Heart right ventricle (tissue), 16 donors: ENCODE measurements at regions of chr11 and their contacts with region 1.

Region 1: DNA sequence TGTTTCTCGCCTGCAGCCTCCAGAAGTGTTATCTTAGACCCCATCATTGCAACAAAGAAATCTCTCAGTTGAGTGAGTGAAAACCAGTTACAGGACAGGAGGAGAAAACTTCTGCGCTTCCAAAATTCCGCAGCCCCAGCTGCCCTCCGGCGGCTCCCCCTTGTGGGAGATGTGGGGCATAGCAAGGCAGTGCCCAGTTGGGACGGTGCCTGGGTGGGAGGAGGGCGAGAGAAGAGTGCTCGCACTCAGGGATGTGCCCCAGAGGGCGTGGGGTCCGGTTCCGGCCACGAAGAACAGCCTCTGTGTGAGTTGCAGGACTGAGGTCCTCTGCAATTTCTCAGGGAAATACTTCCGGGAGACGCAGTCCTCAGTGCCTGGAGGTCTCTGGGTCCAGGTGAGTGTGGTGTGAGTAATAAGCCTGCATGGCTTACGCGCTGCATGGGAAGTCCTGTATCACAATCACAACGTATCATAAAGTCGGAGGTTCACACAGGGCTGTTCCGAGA is 87.0 kb upstream of the BLID start:
- DNase-seq: peak; percentile 66 to 76
- ATAC-seq: peak; percentile 84 to 91 (median 88)
- H3K4me3 ChIP-seq: peak overlapping the region in 8 of 10 donors; percentile 24 to 47 (median 46)
- H3K27ac ChIP-seq: peak overlapping the region in 8 of 10 donors; percentile 2 to 67 (median 46)
- H3K4me1 ChIP-seq: peaks cover 0 to 56% (median 29%) of the 10 kb centered on the region in 9 donors
- H3K27me3 ChIP-seq: no peaks in the 10 kb centered on the region
- CTCF ChIP-seq: peak; percentile 89 to 99 (median 98)

Region 2: GRCh38 chr11:121722431-121723245 is 480.4 kb before region 1 on chr11:
- intact Hi-C with region 1: loop called in 1 of 10 experiments (anchors 10 kb)
- DNase-seq: peak; percentile 73 to 80
- ATAC-seq: peak; percentile 94 to 98 (median 97)
- H3K4me3 ChIP-seq: peak overlapping the region; percentile 16 to 61 (median 51)
- H3K27ac ChIP-seq: peak overlapping the region; percentile 30 to 90 (median 84)
- H3K4me1 ChIP-seq: peaks cover 0 to 22% (median 16%) of the 10 kb centered on the region in 9 donors
- H3K27me3 ChIP-seq: peaks cover 0 to 24% (median 0%) of the 10 kb centered on the region in 7 donors
- CTCF ChIP-seq: peak in 2 of 9 donors; percentile 30 to 33

Region 3: GRCh38 chr11:122038543-122038942 is 164.5 kb before region 1 on chr11:
- intact Hi-C with region 1: loop called in 1 of 10 experiments (anchors 10 kb)
- DNase-seq: no peak
- ATAC-seq: peak in 1 of 8 donors; percentile 48
- H3K4me3 ChIP-seq: no peak overlapping the region
- H3K27ac ChIP-seq: peak overlapping the region in 2 of 10 donors; percentile 9 to 35
- H3K4me1 ChIP-seq: peaks cover 0 to 22% (median 7%) of the 10 kb centered on the region in 9 donors
- H3K27me3 ChIP-seq: no peaks in the 10 kb centered on the region
- CTCF ChIP-seq: no peak

Region 4: GRCh38 chr11:122101625-122102291 is 101.2 kb before region 1 on chr11:
- intact Hi-C with region 1: loop called in 7 of 10 experiments (anchors 5 to 10 kb)
- DNase-seq: peak; percentile 44 to 80
- ATAC-seq: peak; percentile 85 to 92 (median 88)
- H3K4me3 ChIP-seq: peak overlapping the region; percentile 25 to 68 (median 56)
- H3K27ac ChIP-seq: peak overlapping the region; percentile 77 to 96 (median 90)
- H3K4me1 ChIP-seq: peaks cover 0 to 19% (median 11%) of the 10 kb centered on the region in 9 donors
- H3K27me3 ChIP-seq: peaks cover 0 to 58% (median 25%) of the 10 kb centered on the region in 7 donors
- CTCF ChIP-seq: peak; percentile 20 to 82 (median 56)

Region 5: DNA sequence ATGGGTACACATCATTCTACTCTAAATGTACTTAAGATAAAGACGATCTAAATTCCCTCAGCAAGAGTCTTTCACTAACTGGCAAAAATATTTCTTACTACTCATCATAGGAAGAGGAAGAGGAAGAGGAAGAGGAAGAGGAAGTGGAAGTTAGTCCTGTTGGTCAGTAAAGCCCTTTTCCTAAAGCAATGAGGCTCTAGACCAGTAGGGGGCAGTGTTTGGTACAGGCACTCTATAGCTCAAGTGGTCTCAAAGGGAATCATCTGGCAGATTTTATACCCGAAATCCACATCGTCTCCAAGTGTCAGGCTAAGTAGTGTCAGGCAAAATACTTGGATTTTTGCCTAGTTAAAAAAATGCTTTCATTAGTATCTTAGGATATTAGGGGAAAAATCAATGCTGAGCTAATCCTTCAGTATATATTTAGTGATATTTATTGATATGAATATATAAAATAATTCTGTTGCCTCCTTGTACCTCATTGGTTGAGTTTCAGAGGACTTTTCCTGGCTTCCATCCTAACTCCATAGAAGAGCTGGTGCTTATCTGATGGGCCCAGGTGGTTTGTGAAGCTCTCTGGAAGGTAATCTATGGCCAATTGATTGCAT is 94.7 kb before region 1 on chr11:
- intact Hi-C with region 1: loop called in 8 of 10 experiments (anchors 1 to 10 kb)
- DNase-seq: no peak
- ATAC-seq: no peak
- H3K4me3 ChIP-seq: no peak overlapping the region
- H3K27ac ChIP-seq: peak overlapping the region in 9 of 10 donors; percentile 12 to 70 (median 61)
- H3K4me1 ChIP-seq: peaks cover 0 to 30% (median 10%) of the 10 kb centered on the region in 9 donors
- H3K27me3 ChIP-seq: no peaks in the 10 kb centered on the region
- CTCF ChIP-seq: peak; percentile 20 to 57 (median 50)

Region 6: GRCh38 chr11:122293296-122294023 is 90.5 kb after region 1 on chr11:
- intact Hi-C with region 1: no loop called
- DNase-seq: no peak
- ATAC-seq: peak in 6 of 8 donors; percentile 33 to 74 (median 49)
- H3K4me3 ChIP-seq: no peak overlapping the region
- H3K27ac ChIP-seq: peak overlapping the region in 1 of 10 donors; percentile 30
- H3K4me1 ChIP-seq: peaks cover 0 to 4% (median 0%) of the 10 kb centered on the region in 9 donors
- H3K27me3 ChIP-seq: no peaks in the 10 kb centered on the region
- CTCF ChIP-seq: peak; percentile 18 to 57 (median 45)